ENCODE measurements at regions of chr17 and their contacts with region 1.

Region 1: DNA sequence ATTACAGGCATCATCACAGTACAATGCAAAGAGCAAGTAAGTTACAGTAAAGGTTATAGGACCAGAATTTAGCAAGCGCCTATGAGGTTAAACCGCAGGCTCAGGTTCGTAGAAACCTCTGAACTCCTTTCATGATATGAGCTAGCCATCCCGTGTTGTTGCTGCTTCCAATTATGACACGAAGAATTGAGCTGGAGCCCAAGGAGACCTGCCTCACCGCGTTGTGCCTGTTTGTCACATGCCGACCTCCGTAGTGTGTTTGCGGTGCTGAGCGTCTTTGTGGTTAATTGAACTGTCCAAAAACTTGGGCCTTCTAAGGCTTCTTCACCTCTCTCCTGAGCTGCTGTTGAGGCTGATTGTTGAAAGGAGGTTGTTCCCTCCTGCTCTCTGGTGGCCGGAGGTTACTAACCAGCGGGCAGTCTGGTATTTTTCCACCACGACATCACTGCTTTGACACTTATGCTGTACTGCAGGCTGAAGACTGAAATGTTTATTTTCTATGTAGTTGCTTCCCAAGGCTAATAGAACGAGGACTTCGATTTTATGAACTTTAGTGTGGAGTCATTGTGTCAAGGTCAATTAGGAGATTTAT is 67.5 kb downstream of the SEC14L1 start:
- DNase-seq: peak in 1 of 2 donors; percentile 47
- ATAC-seq: peak; percentile 48 to 76 (median 70)
- H3K4me3 ChIP-seq: no peak overlapping the region
- H3K27ac ChIP-seq: peak overlapping the region in 9 of 10 donors; percentile 3 to 77 (median 45)
- H3K4me1 ChIP-seq: peaks cover 13 to 91% (median 63%) of the 10 kb centered on the region in 9 donors
- H3K27me3 ChIP-seq: no peaks in the 10 kb centered on the region
- CTCF ChIP-seq: peak in 8 of 9 donors; percentile 8 to 61 (median 44)

Region 2: GRCh38 chr17:77140166-77140878 is 68.0 kb before region 1 on chr17:
- intact Hi-C with region 1: loop called in 7 of 10 experiments (anchors 5 to 10 kb)
- DNase-seq: peak; percentile 99 to 100
- ATAC-seq: peak; percentile 96 to 99 (median 98)
- H3K4me3 ChIP-seq: peak overlapping the region; percentile 49 to 89 (median 76)
- H3K27ac ChIP-seq: peak overlapping the region; percentile 89 to 97 (median 96)
- H3K4me1 ChIP-seq: peaks cover 4 to 75% (median 18%) of the 10 kb centered on the region in 9 donors
- H3K27me3 ChIP-seq: no peaks in the 10 kb centered on the region
- CTCF ChIP-seq: peak in 2 of 9 donors; percentile 13

Region 3: GRCh38 chr17:77145612-77146245 is 62.6 kb before region 1 on chr17:
- intact Hi-C with region 1: loop called in 7 of 10 experiments (anchors 5 to 10 kb)
- DNase-seq: peak; percentile 46 to 75
- ATAC-seq: peak; percentile 19 to 68 (median 55)
- H3K4me3 ChIP-seq: peak overlapping the region; percentile 18 to 91 (median 74)
- H3K27ac ChIP-seq: peak overlapping the region; percentile 69 to 96 (median 92)
- H3K4me1 ChIP-seq: peaks cover 11 to 89% (median 52%) of the 10 kb centered on the region in 9 donors
- H3K27me3 ChIP-seq: no peaks in the 10 kb centered on the region
- CTCF ChIP-seq: peak in 5 of 9 donors; percentile 17 to 57 (median 42)

Region 4: GRCh38 chr17:77153472-77153871 is 54.8 kb before region 1 on chr17:
- intact Hi-C with region 1: loop called in 7 of 10 experiments (anchors 2 to 10 kb)
- DNase-seq: no peak
- ATAC-seq: no peak
- H3K4me3 ChIP-seq: peak overlapping the region in 1 of 10 donors; percentile 5
- H3K27ac ChIP-seq: peak overlapping the region in 6 of 10 donors; percentile 4 to 96 (median 26)
- H3K4me1 ChIP-seq: peaks cover 18 to 90% (median 72%) of the 10 kb centered on the region in 9 donors
- H3K27me3 ChIP-seq: no peaks in the 10 kb centered on the region
- CTCF ChIP-seq: no peak

Region 5: DNA sequence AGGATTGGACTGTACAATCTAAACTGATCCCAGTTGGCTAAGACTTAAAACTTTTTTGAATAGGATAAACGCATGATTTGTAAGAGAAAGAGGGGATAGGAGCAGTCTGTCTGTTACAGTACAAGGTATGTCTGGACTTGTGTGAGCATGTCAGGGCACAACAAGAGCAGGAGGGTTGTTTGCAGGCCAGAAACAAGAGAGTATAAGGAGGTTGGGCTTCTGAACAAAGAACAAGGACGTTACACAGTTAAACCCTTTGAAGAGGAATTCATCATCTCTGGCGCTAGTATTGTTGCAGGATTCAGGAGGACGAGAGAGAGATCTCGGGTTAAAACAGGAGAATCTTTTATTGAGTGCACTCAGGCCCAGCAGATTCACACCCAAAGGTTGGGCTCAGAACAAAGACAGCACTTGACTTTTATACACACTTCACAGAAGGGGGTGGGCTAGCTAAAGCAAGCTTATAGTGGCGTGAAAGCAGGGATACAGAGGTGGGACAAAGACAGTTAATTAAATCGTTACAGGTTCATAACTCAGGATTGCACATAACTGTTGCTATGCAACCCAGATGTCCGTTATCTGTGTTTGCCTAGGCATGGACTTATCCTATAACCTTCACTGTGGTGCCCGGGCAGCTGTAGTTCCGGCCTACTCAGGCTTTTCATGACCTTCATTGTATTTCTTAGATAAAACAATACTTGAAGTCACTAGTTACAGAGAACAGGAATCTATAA is 33.2 kb before region 1 on chr17:
- intact Hi-C with region 1: no loop called
- DNase-seq: no peak
- ATAC-seq: peak in 1 of 8 donors; percentile 5
- H3K4me3 ChIP-seq: no peak overlapping the region
- H3K27ac ChIP-seq: peak overlapping the region in 1 of 10 donors; percentile 16
- H3K4me1 ChIP-seq: peaks cover 10 to 87% (median 45%) of the 10 kb centered on the region in 9 donors
- H3K27me3 ChIP-seq: no peaks in the 10 kb centered on the region
- CTCF ChIP-seq: no peak

Region 6: GRCh38 chr17:77319211-77320043 is 111.1 kb after region 1 on chr17:
- intact Hi-C with region 1: no loop called
- DNase-seq: peak; percentile 76 to 87
- ATAC-seq: peak; percentile 40 to 71 (median 62)
- H3K4me3 ChIP-seq: peak overlapping the region; percentile 12 to 57 (median 50)
- H3K27ac ChIP-seq: peak overlapping the region in 9 of 10 donors; percentile 63 to 94 (median 81)
- H3K4me1 ChIP-seq: peaks cover 12 to 79% (median 57%) of the 10 kb centered on the region in 9 donors
- H3K27me3 ChIP-seq: no peaks in the 10 kb centered on the region
- CTCF ChIP-seq: no peak

Measured in heart right ventricle (tissue), 16 donors.